ENCODE measurements at regions of chr4 and their contacts with region 1.

Region 1: GRCh38 chr4:24419181-24420034 is 164.9 kb downstream of the DHX15 start:
- DNase-seq: peak; percentile 89
- H3K4me3 Mint-ChIP-seq: no peak overlapping the region
- H3K27ac Mint-ChIP-seq: no peak overlapping the region
- H3K4me1 Mint-ChIP-seq: peaks cover 2% of the 10 kb centered on the region
- H3K27me3 Mint-ChIP-seq: no peaks in the 10 kb centered on the region

Region 2: DNA sequence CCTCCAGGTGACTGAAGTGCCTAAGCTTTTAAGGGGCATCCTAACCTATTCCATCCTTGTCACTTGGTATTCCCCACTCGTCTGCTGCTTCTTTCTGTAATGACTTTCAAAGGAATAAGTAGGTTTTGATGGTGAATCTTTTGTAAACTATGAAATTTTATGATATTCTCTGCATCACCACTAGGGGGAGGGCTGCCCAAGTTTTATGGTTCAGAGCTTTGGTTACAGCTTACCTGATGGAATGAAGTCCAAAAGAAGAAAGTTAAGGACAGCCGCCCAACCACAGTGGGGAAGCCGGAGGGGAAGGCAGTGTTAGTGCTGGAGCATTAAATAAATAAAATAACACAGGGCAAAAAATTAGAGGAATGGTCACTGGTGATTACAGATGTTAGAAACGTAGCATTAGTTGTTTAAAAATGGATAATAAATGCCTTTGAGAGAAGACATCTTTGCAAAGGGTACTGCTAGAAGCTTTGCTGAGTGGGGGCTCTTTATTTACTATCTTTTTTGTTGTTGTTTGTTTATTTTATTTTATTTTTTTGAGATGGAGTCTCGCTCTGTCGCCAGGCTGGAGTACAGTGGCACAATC is 1521.8 kb before region 1 on chr4:
- intact Hi-C with region 1: loop called (anchors 5 kb)
- DNase-seq: peak; percentile 67
- H3K4me3 Mint-ChIP-seq: no peak overlapping the region
- H3K27ac Mint-ChIP-seq: no peak overlapping the region
- H3K4me1 Mint-ChIP-seq: no peaks in the 10 kb centered on the region
- H3K27me3 Mint-ChIP-seq: no peaks in the 10 kb centered on the region

Region 3: GRCh38 chr4:24321151-24321550 is 98.3 kb before region 1 on chr4:
- intact Hi-C with region 1: no loop called
- DNase-seq: no peak
- H3K4me3 Mint-ChIP-seq: no peak overlapping the region
- H3K27ac Mint-ChIP-seq: no peak overlapping the region
- H3K4me1 Mint-ChIP-seq: no peaks in the 10 kb centered on the region
- H3K27me3 Mint-ChIP-seq: no peaks in the 10 kb centered on the region

Region 4: GRCh38 chr4:24404281-24404680 is 15.1 kb before region 1 on chr4:
- intact Hi-C with region 1: no loop called
- DNase-seq: no peak
- H3K4me3 Mint-ChIP-seq: no peak overlapping the region
- H3K27ac Mint-ChIP-seq: no peak overlapping the region
- H3K4me1 Mint-ChIP-seq: no peaks in the 10 kb centered on the region
- H3K27me3 Mint-ChIP-seq: no peaks in the 10 kb centered on the region

Measured in activated CD4-positive, alpha-beta T cell treated with anti-CD3 and anti-CD28 coated beads, Interleukin-2, amount 10 ng/mL, durations not matched to agents 24 days and 14 days (primary cell).